Vagina (tissue), 2 donors: ENCODE measurements at regions of chr1 and their contacts with region 1.

Region 1: GRCh38 chr1:12314333-12314903 is 84.6 kb downstream of the VPS13D start:
- DNase-seq: no peak
- H3K4me3 ChIP-seq: no peak overlapping the region
- H3K27ac ChIP-seq: peak overlapping the region; percentile 62
- H3K4me1 ChIP-seq: peaks cover 27% of the 10 kb centered on the region
- H3K27me3 ChIP-seq: no peaks in the 10 kb centered on the region
- CTCF ChIP-seq: peak in 1 of 3 experiments; percentile 41
- POLR2A ChIP-seq: no peak

Region 2: DNA sequence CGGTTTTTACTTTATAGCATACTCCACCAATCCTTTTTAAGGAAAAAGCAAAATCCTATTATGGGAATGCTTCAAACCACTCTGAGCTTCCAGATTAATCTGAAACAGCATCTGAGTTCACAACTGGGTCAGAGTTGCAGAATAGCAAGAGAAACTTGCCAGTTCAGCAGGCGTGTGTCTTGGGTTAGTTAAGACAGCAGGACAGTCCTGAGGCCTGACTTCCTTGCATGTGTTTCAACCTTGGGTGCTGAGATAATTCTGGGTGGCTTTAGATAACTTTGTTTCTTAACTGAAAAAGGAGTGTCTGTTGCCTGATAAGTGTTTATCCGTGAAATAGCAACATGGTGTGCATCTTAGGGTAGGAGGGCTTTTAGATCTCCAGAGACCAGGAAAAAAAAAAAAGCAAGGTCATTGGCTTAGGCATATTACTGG is 134.3 kb after region 1 on chr1:
- intact Hi-C with region 1: loop called (anchors 10 kb)
- DNase-seq: no peak
- H3K4me3 ChIP-seq: no peak overlapping the region
- H3K27ac ChIP-seq: peak overlapping the region; percentile 83
- H3K4me1 ChIP-seq: peaks cover 86% of the 10 kb centered on the region
- H3K27me3 ChIP-seq: no peaks in the 10 kb centered on the region
- CTCF ChIP-seq: no peak
- POLR2A ChIP-seq: no peak

Region 3: DNA sequence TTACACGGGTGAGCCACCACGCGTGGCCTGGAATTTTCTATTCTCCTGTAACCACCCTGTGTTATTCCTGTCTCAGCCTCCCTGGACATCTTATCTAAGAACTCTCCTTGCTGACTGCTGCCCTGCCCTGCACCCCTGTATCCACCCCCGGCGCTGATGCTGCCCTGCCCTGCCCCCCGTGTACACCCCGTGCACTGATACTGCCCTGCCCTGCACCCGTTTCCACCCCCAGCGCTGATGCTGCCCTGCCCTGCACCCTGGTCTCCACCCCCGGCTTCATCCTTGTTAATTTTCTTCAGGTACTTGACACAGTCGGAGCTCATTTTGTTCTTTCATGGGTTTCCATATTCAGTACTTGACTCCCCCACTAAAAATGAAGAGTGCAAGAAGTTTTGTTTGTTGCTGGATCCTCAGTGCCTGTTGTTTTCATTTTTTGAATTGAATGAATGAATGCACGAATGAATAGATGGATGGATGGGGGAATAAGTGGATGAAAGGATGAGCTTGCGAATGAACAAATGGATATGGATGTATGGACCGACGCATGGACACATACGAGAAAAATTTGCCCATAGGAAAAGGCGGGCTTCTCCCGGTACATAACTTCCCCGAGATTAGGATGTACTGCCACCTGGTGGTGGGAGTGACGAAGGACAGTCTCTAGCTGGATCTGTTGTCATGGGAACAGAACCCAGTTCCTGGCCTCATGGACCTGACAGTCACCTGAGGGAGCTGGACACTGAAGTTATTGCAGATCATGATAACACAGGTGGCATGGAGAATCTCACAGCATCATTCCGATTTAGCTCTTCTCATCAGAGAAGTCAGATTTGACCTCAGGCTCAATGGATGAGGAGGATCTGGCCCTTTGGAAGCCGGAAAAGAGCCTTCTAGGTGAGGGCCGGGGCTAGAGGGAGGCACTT is 344.4 kb after region 1 on chr1:
- intact Hi-C with region 1: loop called (anchors 10 kb)
- DNase-seq: no peak
- H3K4me3 ChIP-seq: no peak overlapping the region
- H3K27ac ChIP-seq: no peak overlapping the region
- H3K4me1 ChIP-seq: no peaks in the 10 kb centered on the region
- H3K27me3 ChIP-seq: no peaks in the 10 kb centered on the region
- CTCF ChIP-seq: peak; percentile 88 to 96 (median 91)
- POLR2A ChIP-seq: no peak

Region 4: GRCh38 chr1:13651279-13651678 is 1336.9 kb after region 1 on chr1:
- intact Hi-C with region 1: no loop called
- DNase-seq: no peak
- H3K4me3 ChIP-seq: no peak overlapping the region
- H3K27ac ChIP-seq: no peak overlapping the region
- H3K4me1 ChIP-seq: no peaks in the 10 kb centered on the region
- H3K27me3 ChIP-seq: no peaks in the 10 kb centered on the region
- CTCF ChIP-seq: no peak
- POLR2A ChIP-seq: no peak